Activated B cell treated with CpG ODN at 0.5 μM for 24 hours (primary cell): ENCODE measurements at regions of chr7 and their contacts with region 1.

Region 1: DNA sequence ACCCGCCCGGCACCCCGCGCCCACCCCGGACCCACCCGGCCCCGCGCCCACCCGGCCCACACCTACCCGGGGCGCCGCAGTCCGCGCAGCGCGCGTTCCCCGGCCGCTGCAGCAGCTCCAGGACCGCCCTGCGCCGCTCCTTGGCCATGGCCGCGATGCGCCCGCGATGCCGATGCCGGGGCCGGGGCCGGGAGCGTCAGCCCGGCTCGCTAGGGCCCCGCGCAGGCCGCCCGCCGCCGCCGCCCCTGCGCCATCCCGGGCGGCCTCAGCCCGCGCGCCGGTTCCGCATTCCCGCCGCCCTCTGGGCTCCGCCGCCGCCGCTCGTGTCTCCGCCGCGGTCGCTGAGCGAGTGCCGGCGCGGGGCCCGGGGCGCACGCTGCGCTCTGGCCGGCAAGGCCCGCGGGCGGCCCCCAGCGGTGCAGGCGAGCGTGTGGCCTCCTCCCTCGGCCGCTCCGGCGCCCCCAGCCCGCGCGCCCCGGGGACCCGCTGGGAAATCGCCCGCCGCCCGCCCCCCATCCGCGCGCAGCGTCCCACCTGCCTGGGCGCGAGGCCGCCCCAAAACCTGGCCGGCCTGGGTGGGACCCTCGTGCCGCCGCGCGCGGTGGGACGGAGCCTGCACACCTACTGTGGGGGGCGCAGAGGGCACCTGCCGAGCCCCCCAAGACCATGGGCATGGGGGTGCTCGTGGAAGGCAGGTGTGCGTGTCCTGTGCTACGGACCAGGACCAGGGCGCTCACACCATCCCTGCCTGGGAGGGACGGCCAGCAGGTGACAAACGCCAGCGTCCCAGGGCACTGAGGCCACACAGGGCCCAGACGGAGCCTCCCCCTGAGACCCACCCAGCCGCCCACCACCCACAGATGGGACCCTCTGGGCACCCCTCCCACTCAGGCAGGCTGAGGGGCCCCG is at the start of gene ADAP1:
- DNase-seq: peak; percentile 57
- ATAC-seq: peak; percentile 73
- H3K4me3 Mint-ChIP-seq: peak within 1 kb of the TSS; percentile 70
- H3K27ac Mint-ChIP-seq: no peak within 1 kb of the TSS
- H3K4me1 Mint-ChIP-seq: peaks cover 18% of the 10 kb centered on the region
- H3K27me3 Mint-ChIP-seq: peaks cover 10% of the 10 kb centered on the region
- CTCF ChIP-seq: no peak
- total RNA-seq, gene ADAP1: 9.4 and 11.9 TPM in 2 replicates

Region 2: GRCh38 chr7:909358-910329 is 44.9 kb before region 1 on chr7:
- CTCF ChIA-PET with region 1: interaction called, 6 read pairs
- POLR2A ChIA-PET with region 1: interaction called, 8 read pairs
- intact Hi-C with region 1: loop called (anchors 1 kb)
- DNase-seq: peak; percentile 59
- ATAC-seq: peak; percentile 51
- H3K4me3 Mint-ChIP-seq: peak overlapping the region; percentile 74
- H3K27ac Mint-ChIP-seq: no peak overlapping the region
- H3K4me1 Mint-ChIP-seq: peaks cover 15% of the 10 kb centered on the region
- H3K27me3 Mint-ChIP-seq: peaks cover 2% of the 10 kb centered on the region
- CTCF ChIP-seq: no peak

Region 3: GRCh38 chr7:936131-937054 is 18.2 kb before region 1 on chr7:
- CTCF ChIA-PET with region 1: no interaction called
- POLR2A ChIA-PET with region 1: no interaction called
- intact Hi-C with region 1: loop called (anchors 2 kb)
- DNase-seq: peak; percentile 47
- ATAC-seq: peak; percentile 78
- H3K4me3 Mint-ChIP-seq: peak overlapping the region; percentile 42
- H3K27ac Mint-ChIP-seq: peak overlapping the region; percentile 19
- H3K4me1 Mint-ChIP-seq: peaks cover 19% of the 10 kb centered on the region
- H3K27me3 Mint-ChIP-seq: no peaks in the 10 kb centered on the region
- CTCF ChIP-seq: no peak